ENCODE measurements at regions of chr11 and their contacts with region 1.

Region 1: DNA sequence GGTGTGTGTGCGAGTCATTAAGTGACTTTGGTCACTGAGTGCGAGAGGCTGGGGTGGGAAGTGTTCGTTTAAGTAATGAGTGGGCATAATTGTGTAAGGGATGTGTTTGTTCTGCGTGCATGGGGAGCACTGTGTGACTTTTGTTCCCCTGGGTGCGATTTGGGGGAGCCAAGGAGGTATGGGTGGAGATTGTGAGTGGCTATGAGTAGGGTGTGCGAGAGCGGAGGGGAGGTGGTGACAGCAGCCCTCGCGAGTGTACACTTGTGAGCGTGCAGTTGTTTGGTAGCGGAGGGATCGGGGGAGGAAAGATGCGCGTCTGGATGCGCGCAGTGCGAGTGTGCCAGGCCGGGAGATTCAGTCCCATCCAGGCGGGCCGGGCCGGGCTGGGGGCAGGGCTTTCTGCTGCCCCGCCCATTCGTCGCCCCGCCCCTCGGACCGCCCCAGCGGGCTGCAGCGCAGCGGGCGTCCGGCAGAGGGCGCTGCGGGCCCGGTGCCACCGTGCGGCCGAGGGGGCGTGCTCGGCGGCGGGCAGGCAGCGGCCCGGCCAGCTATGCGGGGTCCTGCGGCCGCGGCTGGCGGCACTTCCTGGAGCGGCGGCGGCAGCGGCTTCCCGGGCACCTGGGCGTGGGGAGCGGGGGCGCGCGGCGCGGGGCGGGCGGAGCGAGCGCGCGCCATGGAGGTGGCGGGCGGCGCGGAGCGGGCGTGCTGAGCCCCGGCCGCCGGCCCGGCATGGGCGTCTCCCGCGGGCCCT is at the start of gene DGKZ:
- DNase-seq: peak; percentile 81
- ATAC-seq: peak; percentile 77
- H3K4me3 Mint-ChIP-seq: peak within 1 kb of the TSS; percentile 77
- H3K27ac Mint-ChIP-seq: no peak within 1 kb of the TSS; the same call in 1 of the 2 replicates
- H3K4me1 Mint-ChIP-seq: peaks cover 86% of the 10 kb centered on the region
- H3K27me3 Mint-ChIP-seq: peaks cover 11% of the 10 kb centered on the region
- CTCF ChIP-seq: peak; percentile 80
- total RNA-seq, gene DGKZ: 107 to 139 TPM (median 115 TPM) in 3 replicates

Region 2: GRCh38 chr11:46332568-46333393 is 14.3 kb before region 1 on chr11:
- CTCF ChIA-PET with region 1: interaction called, 62 read pairs
- POLR2A ChIA-PET with region 1: interaction called, 4 read pairs
- DNase-seq: peak; percentile 55
- ATAC-seq: peak; percentile 54
- H3K4me3 Mint-ChIP-seq: peak overlapping the region; percentile 69
- H3K27ac Mint-ChIP-seq: no peak overlapping the region
- H3K4me1 Mint-ChIP-seq: peaks cover 67% of the 10 kb centered on the region
- H3K27me3 Mint-ChIP-seq: peaks cover 56% of the 10 kb centered on the region
- CTCF ChIP-seq: no peak

Region 3: DNA sequence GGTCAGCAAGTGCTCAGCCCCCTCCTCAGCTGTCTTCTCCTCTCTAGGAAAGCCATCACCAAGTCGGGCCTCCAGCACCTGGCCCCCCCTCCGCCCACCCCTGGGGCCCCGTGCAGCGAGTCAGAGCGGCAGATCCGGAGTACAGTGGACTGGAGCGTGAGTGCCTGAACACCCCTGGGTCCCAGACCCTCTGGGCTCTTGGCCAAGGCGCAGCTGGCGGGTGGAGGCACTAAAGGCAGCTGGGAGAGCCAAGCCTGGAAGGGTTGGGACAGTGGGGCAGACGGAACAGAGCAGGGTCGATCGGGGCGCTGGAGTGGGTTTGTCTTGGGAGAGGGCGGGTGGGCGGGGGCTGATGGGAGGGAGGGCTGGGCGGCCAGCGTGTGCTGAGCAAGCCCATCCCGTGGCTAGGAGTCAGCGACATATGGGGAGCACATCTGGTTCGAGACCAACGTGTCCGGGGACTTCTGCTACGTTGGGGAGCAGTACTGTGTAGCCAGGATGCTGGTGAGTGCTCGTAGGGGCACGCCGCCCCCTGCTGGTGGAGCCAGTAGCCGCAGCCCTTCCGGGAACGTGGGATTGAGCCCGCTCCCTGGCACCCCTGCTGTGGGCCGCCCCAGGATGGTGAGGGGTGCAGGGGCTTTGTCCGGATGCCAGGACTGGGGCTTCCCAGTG is 20.3 kb after region 1 on chr11:
- CTCF ChIA-PET with region 1: interaction called, 231 read pairs
- POLR2A ChIA-PET with region 1: interaction called, 6 read pairs
- DNase-seq: peak; percentile 89
- ATAC-seq: peak; percentile 66
- H3K4me3 Mint-ChIP-seq: no peak overlapping the region
- H3K27ac Mint-ChIP-seq: no peak overlapping the region; the same call in 1 of the 2 replicates
- H3K4me1 Mint-ChIP-seq: peaks cover 26% of the 10 kb centered on the region
- H3K27me3 Mint-ChIP-seq: no peaks in the 10 kb centered on the region
- CTCF ChIP-seq: peak; percentile 96

Region 4: GRCh38 chr11:46380340-46381047 is 33.4 kb after region 1 on chr11:
- CTCF ChIA-PET with region 1: interaction called, 51 read pairs
- POLR2A ChIA-PET with region 1: interaction called, 3 read pairs
- DNase-seq: peak; percentile 91
- ATAC-seq: peak; percentile 38
- H3K4me3 Mint-ChIP-seq: peak overlapping the region; percentile 69
- H3K27ac Mint-ChIP-seq: peak overlapping the region; percentile 76
- H3K4me1 Mint-ChIP-seq: peaks cover 21% of the 10 kb centered on the region
- H3K27me3 Mint-ChIP-seq: no peaks in the 10 kb centered on the region
- CTCF ChIP-seq: no peak

Measured in WTC11 (cell line).